Activated CD4-positive, alpha-beta T cell treated with anti-CD3 and anti-CD28 coated beads for 36 hours (primary cell): ENCODE measurements at regions of chr2 and their contacts with region 1.

Region 1: GRCh38 chr2:197838036-197838435 is 33.6 kb downstream of the PLCL1 start:
- DNase-seq: peak; percentile 51
- ATAC-seq: peak; percentile 98
- H3K4me3 Mint-ChIP-seq: peak overlapping the region; percentile 53
- H3K27ac Mint-ChIP-seq: peak overlapping the region; percentile 59
- H3K4me1 Mint-ChIP-seq: peaks cover 59% of the 10 kb centered on the region
- H3K27me3 Mint-ChIP-seq: no peaks in the 10 kb centered on the region

Region 2: GRCh38 chr2:197813093-197813787 is 24.8 kb before region 1 on chr2:
- CTCF ChIA-PET with region 1: interaction called, 21 read pairs
- POLR2A ChIA-PET with region 1: interaction called, 3 read pairs
- intact Hi-C with region 1: loop called in 1 of 2 experiments (anchors 2 kb)
- DNase-seq: peak; percentile 32
- ATAC-seq: peak; percentile 65
- H3K4me3 Mint-ChIP-seq: no peak overlapping the region
- H3K27ac Mint-ChIP-seq: no peak overlapping the region
- H3K4me1 Mint-ChIP-seq: peaks cover 66% of the 10 kb centered on the region
- H3K27me3 Mint-ChIP-seq: no peaks in the 10 kb centered on the region

Region 3: DNA sequence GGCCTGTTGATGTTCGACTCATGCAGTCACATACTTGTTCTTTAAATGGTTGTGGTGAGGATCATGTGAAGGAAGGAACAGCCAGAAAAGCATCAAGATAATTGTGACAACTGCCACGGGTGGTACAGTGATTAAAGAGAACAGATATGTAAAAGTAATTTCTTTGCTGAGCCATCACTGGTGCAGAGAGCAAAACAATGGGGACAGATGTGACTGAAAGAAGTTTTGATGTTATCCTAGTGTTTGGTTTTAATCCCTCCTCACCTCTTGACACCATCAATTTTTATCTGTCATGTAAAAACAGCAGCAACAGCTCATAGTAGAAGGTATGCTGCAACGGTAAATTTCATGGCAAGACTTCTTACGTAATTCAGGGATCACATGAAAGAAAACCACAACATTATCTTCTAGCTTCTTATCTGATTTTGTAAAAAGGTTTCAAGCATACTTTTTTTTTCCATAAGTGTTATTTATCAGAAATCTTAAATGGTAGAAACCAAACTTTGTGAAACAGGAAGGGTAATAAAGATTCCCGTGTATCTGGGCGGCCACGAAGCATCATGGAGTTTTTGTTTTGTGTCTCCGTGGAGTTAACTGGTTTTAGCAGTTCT is 31.6 kb after region 1 on chr2:
- CTCF ChIA-PET with region 1: interaction called, 5 read pairs
- POLR2A ChIA-PET with region 1: interaction called, 3 read pairs
- intact Hi-C with region 1: loop called in 1 of 2 experiments (anchors 2 kb)
- DNase-seq: peak; percentile 33
- ATAC-seq: peak; percentile 65
- H3K4me3 Mint-ChIP-seq: peak overlapping the region; percentile 72
- H3K27ac Mint-ChIP-seq: peak overlapping the region; percentile 94
- H3K4me1 Mint-ChIP-seq: peaks cover 70% of the 10 kb centered on the region
- H3K27me3 Mint-ChIP-seq: no peaks in the 10 kb centered on the region

Region 4: GRCh38 chr2:197931661-197932312 is 93.8 kb after region 1 on chr2:
- CTCF ChIA-PET with region 1: interaction called, 3 read pairs
- POLR2A ChIA-PET with region 1: interaction called, 3 read pairs
- intact Hi-C with region 1: loop called in 1 of 2 experiments (anchors 5 kb)
- DNase-seq: no peak
- ATAC-seq: peak; percentile 65
- H3K4me3 Mint-ChIP-seq: no peak overlapping the region
- H3K27ac Mint-ChIP-seq: no peak overlapping the region
- H3K4me1 Mint-ChIP-seq: peaks cover 47% of the 10 kb centered on the region
- H3K27me3 Mint-ChIP-seq: no peaks in the 10 kb centered on the region

Region 5: DNA sequence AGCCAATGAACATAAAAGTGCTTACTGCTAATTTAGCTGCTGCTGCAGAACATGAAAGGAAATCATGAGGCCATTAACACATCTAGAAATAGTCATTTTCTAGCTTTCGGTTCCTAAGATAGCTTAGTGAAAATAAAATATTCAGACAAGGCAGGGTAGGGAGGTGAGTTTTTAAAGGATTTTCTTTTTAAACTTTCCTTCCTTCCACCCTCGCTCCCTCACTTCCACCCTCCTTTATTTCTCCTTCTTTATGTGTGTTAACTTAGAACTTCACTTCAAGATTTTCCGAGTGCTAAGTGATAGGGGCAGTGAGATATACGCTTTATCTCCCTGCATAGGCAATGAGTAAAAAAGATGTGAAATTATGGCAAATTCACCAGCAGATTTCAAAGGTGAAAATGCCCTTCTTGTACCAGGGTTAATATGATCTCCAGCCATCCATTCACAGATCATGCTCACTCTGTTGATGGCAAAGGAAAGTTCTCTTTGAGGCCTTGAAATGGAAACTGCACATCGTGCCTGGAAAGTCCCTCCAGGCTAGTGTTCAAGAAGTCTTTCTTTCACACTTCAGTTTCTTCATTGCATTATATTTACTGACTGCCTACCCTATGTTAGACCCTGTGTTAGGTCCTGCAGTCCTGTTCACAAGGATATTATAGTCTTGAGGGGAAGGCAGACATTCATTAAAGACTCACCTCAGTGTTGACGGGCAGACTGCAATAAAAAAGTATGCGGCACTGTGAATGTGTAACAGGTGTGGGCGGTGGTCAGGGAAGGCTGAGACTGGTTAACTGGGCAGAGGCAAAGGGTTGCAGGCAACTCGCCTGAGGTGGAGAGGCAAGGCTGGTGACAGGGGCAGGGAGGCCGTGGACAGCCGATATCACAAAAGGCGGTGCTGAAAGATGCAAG is 167.1 kb after region 1 on chr2:
- CTCF ChIA-PET with region 1: no interaction called
- POLR2A ChIA-PET with region 1: no interaction called
- intact Hi-C with region 1: loop called (anchors 2 kb)
- DNase-seq: peak; percentile 71
- ATAC-seq: peak; percentile 67
- H3K4me3 Mint-ChIP-seq: peak overlapping the region; percentile 32
- H3K27ac Mint-ChIP-seq: peak overlapping the region; percentile 88
- H3K4me1 Mint-ChIP-seq: peaks cover 83% of the 10 kb centered on the region
- H3K27me3 Mint-ChIP-seq: no peaks in the 10 kb centered on the region